Activated T-helper 2 cell treated with anti-CD3 and anti-CD28 coated beads, Interferon-gamma antibody, Interleukin-2, Interleukin-4, amounts not matched to agents 10 μg/mL and 5 μg/mL and 100 μg/mL, durations not matched to agents 14 hours and 24 hours and 36 hours (primary cell): ENCODE measurements at regions of chr14 and their contacts with region 1.

Region 1: DNA sequence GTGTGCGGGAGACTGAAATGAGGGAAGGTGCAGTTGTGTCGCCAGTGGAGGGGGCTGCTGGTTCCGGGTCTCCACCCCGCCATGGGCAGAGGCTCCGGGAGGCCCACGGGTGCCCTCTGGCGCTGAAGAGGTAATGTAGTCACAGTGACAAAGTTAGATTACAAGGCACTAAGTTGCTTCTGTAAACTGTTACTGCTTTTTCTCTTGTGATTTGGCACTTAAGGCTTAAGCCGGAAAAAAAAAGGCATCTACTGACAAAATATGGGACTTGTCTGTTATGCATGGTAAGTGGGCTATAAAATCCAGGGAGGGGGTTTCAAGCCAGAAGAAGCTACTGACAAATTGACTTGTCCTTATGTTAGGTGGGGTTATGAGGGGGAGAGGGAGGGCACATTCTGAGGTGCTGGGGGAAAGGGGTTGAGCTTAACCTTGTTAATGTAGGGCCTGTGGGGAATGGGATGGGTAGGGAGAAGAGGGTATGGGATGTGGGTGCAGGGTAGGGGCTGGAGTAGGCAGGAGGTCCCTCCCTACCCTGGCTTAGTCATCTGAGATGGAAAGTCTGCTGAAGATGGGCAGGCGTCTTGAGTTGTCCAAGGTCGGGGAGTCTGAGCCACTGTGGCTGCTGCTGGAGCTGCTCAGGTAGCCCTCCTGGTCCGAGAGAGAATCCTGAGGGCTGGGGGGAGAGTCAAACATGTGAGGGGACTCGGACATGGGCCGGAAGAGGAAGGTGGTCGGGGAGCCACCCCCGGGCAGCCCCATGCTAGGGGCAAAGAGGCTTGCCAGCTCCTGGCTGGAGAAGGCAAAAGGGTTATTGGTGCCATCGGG is 3.7 kb downstream of the ZFP36L1 start:
- DNase-seq: peak; percentile 81
- H3K4me3 Mint-ChIP-seq: peak overlapping the region; percentile 92
- H3K27ac Mint-ChIP-seq: peak overlapping the region; percentile 94
- H3K4me1 Mint-ChIP-seq: peaks cover 57% of the 10 kb centered on the region
- H3K27me3 Mint-ChIP-seq: no peaks in the 10 kb centered on the region

Region 2: GRCh38 chr14:68232300-68233055 is 556.7 kb before region 1 on chr14:
- intact Hi-C with region 1: no loop called
- DNase-seq: peak; percentile 20
- H3K4me3 Mint-ChIP-seq: no peak overlapping the region
- H3K27ac Mint-ChIP-seq: no peak overlapping the region
- H3K4me1 Mint-ChIP-seq: peaks cover 15% of the 10 kb centered on the region
- H3K27me3 Mint-ChIP-seq: no peaks in the 10 kb centered on the region

Region 3: DNA sequence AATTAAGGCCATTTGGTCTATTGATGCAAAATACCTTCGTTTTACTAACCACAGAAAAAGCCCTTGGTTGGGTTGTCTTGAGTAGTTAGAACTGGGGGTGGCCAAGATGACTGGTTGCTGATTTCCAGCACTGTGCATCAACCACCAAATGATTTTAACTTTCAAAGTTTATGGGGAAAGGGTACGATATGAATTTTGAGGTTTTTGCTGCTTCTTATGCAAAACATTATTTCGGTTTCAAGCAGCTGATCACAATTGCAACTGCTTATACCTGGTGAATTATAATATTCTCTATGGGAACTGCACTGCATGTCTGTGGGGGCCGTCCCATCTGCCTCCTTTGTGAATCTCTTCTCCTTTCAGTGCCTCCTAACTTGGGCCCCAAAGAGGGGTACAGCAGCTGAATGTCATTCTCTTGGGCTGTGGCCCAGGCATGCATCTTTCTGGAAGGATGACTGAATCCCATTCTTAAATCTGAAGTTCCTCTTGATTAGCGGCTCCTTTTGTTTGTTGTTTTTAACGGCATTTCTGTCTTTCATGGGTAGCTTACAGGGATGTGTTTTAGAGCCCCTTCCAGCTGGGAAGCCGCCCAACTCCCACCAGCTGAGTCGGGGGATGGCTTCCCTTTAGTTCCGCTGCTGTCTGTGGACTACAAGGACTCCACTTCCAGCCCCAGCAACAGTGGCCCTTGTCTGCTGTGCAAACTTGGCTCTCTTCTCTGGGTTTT is 476.2 kb before region 1 on chr14:
- intact Hi-C with region 1: loop called (anchors 1 kb)
- DNase-seq: no peak
- H3K4me3 Mint-ChIP-seq: no peak overlapping the region
- H3K27ac Mint-ChIP-seq: no peak overlapping the region
- H3K4me1 Mint-ChIP-seq: peaks cover 26% of the 10 kb centered on the region
- H3K27me3 Mint-ChIP-seq: no peaks in the 10 kb centered on the region

Region 4: DNA sequence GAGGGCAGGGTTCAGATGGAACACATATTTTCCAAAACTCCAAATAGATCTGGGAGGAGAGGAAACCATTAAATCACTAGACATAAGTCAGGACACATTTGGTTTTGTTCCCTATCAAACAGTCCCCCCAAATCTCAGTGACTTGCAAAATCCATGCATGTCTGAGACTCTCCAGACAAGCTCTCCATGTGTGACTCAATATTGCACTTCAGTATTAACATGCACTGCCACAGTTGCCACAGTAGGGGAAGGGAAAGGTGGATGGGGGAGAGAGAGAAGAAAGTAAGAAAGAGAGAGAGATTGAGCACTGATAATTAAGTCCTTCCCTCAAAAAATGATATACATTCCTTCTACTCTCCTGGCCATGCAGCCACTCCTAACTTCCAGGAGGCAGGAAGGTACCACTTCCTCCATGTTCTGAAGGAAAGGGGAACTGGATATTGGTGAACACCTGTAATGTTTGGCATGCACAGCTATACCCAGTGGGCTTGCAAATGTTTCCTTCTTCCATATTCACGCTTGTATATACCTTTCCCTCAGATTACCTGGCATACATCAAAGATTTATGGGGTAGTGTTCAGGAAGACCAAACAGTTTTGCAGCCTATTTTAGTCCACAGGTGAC is 306.3 kb before region 1 on chr14:
- intact Hi-C with region 1: loop called (anchors 2 kb)
- DNase-seq: no peak
- H3K4me3 Mint-ChIP-seq: no peak overlapping the region
- H3K27ac Mint-ChIP-seq: no peak overlapping the region
- H3K4me1 Mint-ChIP-seq: peaks cover 34% of the 10 kb centered on the region
- H3K27me3 Mint-ChIP-seq: no peaks in the 10 kb centered on the region

Region 5: GRCh38 chr14:68718023-68718995 is 70.9 kb before region 1 on chr14:
- intact Hi-C with region 1: loop called (anchors 2 kb)
- DNase-seq: no peak
- H3K4me3 Mint-ChIP-seq: no peak overlapping the region
- H3K27ac Mint-ChIP-seq: no peak overlapping the region
- H3K4me1 Mint-ChIP-seq: peaks cover 31% of the 10 kb centered on the region
- H3K27me3 Mint-ChIP-seq: no peaks in the 10 kb centered on the region

Region 6: GRCh38 chr14:68734231-68734775 is 54.9 kb before region 1 on chr14:
- intact Hi-C with region 1: no loop called
- DNase-seq: no peak
- H3K4me3 Mint-ChIP-seq: peak overlapping the region; percentile 9
- H3K27ac Mint-ChIP-seq: peak overlapping the region; percentile 63
- H3K4me1 Mint-ChIP-seq: peaks cover 53% of the 10 kb centered on the region
- H3K27me3 Mint-ChIP-seq: no peaks in the 10 kb centered on the region